AG04450 (cell line): ENCODE measurements at regions of chr3 and their contacts with region 1.

Region 1: GRCh38 chr3:66407611-66408218 is 93.1 kb downstream of the LRIG1 start:
- DNase-seq: no peak
- H3K4me3 ChIP-seq: no peak overlapping the region
- H3K27ac ChIP-seq: no peak overlapping the region
- H3K27me3 ChIP-seq: no peaks in the 10 kb centered on the region
- CTCF ChIP-seq: peak; percentile 82

Region 2: DNA sequence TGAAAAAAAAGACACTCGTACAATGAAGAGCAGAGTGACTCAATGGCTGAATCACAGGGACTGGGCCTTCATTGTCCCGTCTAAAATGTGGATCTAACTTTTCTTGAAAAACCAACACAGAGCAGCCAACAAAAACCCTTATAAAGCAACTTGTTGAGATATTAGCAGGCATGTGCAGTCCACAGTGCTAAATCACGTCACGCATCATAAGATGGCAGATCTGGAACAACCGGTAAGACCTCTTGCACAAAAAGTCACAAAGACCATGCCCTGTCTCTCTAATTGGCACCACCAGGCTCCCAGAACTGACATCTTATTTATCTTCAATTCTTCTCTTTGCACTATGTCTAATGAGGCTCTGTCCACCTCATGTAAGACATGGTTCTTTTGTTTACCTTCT is 546.0 kb before region 1 on chr3:
- CTCF ChIA-PET with region 1: no interaction called
- POLR2A ChIA-PET with region 1: no interaction called
- DNase-seq: no peak
- H3K4me3 ChIP-seq: no peak overlapping the region
- H3K27ac ChIP-seq: no peak overlapping the region
- H3K27me3 ChIP-seq: no peaks in the 10 kb centered on the region
- CTCF ChIP-seq: no peak

Region 3: DNA sequence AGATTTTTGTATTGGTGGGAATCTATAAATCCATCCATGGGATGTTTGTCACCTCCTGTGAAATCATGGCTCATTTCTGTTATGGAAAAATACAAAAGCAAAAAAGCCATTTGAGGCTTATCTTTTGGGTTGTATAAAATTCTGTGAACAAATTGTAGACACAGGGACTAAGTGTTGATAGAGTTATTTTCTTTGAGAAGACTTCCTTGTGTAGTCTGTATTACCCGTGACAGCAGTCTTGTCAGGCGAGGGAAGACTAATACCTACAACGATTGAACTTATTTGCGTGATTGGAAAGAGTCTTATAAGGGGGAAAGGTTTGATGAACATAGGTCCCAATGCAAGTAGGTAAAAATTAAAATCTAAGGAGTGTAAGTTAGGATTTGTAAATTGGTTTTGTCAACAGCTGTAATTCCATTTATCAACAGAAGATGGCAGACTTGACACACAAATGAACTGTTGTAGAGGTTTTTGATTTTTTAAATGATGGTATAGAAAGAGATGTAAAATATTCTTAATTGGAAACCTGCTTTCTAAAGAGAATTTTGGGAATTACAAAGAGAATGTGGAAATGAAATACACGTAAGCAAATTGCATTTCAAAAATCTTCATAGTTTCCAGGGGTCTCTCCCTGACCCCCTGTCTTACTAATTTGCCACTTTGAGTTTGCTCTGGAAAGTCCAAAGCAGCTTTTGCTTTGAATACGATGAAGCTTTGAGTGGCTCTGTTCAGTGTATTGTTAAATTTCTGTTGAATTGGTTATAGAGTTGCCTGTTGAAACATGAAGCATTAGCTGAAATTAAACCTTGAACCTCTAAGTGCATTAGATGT is 153.7 kb before region 1 on chr3:
- CTCF ChIA-PET with region 1: interaction called, 23 read pairs
- POLR2A ChIA-PET with region 1: no interaction called
- DNase-seq: no peak
- H3K4me3 ChIP-seq: no peak overlapping the region
- H3K27ac ChIP-seq: no peak overlapping the region
- H3K27me3 ChIP-seq: no peaks in the 10 kb centered on the region
- CTCF ChIP-seq: peak; percentile 62

Region 4: GRCh38 chr3:66378256-66378823 is 29.4 kb before region 1 on chr3:
- CTCF ChIA-PET with region 1: interaction called, 13 read pairs
- POLR2A ChIA-PET with region 1: no interaction called
- DNase-seq: no peak
- H3K4me3 ChIP-seq: no peak overlapping the region
- H3K27ac ChIP-seq: no peak overlapping the region
- H3K27me3 ChIP-seq: no peaks in the 10 kb centered on the region
- CTCF ChIP-seq: peak; percentile 55

Region 5: DNA sequence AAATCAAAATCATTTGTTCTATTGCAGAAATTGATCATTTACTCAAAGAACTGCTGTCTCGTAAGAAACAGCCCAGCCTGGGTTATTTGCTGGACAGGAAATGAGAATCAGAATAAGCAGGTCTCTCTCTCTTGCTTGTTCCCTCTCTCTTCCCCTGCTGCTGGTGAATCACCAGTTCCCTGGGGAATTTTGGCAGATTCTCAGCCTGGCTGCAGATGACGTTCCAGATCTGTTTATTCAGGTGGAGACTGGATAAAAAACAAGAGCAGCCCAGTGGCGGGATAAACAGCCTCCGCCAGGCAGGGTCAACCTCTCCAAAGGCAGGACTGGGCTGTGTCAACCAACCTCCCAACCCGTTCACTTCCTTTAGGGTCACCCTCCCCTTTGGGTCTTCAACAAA is 21.0 kb after region 1 on chr3:
- CTCF ChIA-PET with region 1: interaction called, 16 read pairs
- POLR2A ChIA-PET with region 1: no interaction called
- DNase-seq: peak; percentile 98
- H3K4me3 ChIP-seq: no peak overlapping the region
- H3K27ac ChIP-seq: peak overlapping the region; percentile 96
- H3K27me3 ChIP-seq: no peaks in the 10 kb centered on the region
- CTCF ChIP-seq: 0 out of 2 replicates have a peak, but pooled peaks have one; percentile 10

Region 6: DNA sequence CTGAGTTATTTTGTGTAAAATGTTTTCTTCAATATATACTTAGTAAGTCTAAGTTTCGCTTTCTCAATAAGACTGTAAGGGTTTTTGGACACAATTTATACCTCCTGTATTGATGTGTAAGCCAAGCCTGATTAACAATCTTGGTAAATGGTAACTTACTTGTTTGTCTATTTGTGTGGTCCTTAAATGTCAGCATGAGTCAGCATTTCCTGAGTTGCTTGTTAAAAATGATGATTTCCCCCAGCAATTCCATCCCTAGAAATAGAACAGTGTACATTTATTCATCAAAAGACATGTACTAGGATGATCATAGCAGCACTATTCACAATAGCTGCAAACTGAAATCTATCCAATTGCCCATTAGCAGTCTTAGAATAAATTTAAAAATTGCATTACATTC is 146.5 kb after region 1 on chr3:
- CTCF ChIA-PET with region 1: interaction called, 11 read pairs
- POLR2A ChIA-PET with region 1: no interaction called
- DNase-seq: peak; percentile 7
- H3K4me3 ChIP-seq: no peak overlapping the region
- H3K27ac ChIP-seq: no peak overlapping the region
- H3K27me3 ChIP-seq: no peaks in the 10 kb centered on the region
- CTCF ChIP-seq: no peak

Region 7: DNA sequence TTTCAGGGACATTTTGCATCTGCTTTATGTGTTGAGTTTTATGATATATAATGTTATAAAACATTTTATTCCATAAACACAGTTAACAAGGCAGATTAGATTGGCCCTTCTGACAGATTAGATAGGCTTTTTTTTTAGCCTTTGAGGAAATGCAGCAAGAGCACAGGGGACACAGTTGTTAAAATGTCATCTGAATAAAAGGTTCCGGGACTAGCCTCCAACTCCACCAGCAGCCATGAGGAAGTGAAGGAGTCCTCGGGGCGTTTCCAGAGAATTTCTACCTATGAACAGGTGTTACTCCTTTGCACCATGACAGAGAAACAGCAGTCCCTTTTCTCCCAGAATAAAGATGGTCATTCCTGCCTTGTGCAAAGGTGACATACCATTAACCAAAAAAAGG is 422.6 kb after region 1 on chr3:
- CTCF ChIA-PET with region 1: interaction called, 17 read pairs
- POLR2A ChIA-PET with region 1: no interaction called
- DNase-seq: no peak
- H3K4me3 ChIP-seq: no peak overlapping the region
- H3K27ac ChIP-seq: no peak overlapping the region
- H3K27me3 ChIP-seq: peaks cover 17% of the 10 kb centered on the region
- CTCF ChIP-seq: no peak